ENCODE measurements at regions of chr21 and their contacts with region 1.

Region 1: GRCh38 chr21:43646550-43647260 is 12.6 kb downstream of the HSF2BP start:
- DNase-seq: no peak
- ATAC-seq: peak; percentile 98
- H3K4me3 ChIP-seq: no peak overlapping the region
- H3K27ac ChIP-seq: no peak overlapping the region
- H3K4me1 ChIP-seq: peaks cover 11% of the 10 kb centered on the region; the same call in 1 of the 2 replicates
- H3K27me3 ChIP-seq: no peaks in the 10 kb centered on the region; a peak in 1 of 4 replicates
- CTCF ChIP-seq: peak; percentile 99 to 100 (median 100); a peak in 5 of 6 replicates
- EP300 ChIP-seq: no peak
- POLR2A ChIP-seq: no peak
- RAD21 ChIP-seq: peak; percentile 99

Region 2: DNA sequence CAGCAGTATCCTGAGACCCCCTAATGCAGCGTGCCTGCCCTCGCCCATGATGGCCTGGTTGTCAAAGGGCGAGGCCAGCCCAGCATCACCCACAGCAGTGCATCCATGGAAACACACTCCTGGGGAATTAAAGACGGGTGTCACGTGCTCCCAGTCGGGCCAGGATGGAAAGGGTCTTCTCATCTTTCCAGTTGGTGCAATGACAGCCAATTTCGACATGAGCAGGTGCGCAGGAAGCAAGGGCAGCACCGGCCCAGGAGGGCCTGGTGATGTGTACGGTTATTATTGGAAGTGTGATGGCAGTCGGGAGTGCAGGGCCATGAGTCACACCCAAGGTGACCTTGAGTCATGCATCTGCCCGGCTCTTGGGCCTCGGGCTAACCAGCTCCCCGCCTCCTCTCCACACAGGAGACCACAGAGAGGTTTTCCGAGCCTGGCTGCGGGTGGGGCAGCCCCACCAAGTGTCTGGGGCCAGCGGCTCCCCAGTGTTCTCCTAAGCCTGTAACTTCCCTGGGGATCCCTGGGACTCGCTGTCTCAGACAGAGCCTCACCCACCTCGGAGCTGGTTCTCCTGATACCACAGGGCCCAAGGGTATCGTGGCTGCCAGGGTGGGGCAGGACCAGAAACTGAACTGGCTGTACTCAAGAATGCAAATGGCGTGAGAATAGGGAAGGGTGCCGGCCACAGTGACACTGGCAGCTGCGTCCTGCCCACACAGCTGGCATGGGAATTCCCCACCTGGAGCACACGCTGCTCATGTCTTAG is 339.6 kb before region 1 on chr21:
- CTCF ChIA-PET with region 1: no interaction called
- POLR2A ChIA-PET with region 1: no interaction called
- RAD21 ChIA-PET with region 1: interaction called, 3 read pairs
- SMC1A ChIA-PET with region 1: no interaction called
- in situ Hi-C with region 1: no loop called
- intact Hi-C with region 1: loop called (anchors 5 kb)
- DNase-seq: peak; percentile 39
- ATAC-seq: peak; percentile 88
- H3K4me3 ChIP-seq: no peak overlapping the region
- H3K27ac ChIP-seq: no peak overlapping the region
- H3K4me1 ChIP-seq: peaks cover 15% of the 10 kb centered on the region
- H3K27me3 ChIP-seq: no peaks in the 10 kb centered on the region
- CTCF ChIP-seq: no peak
- EP300 ChIP-seq: no peak
- POLR2A ChIP-seq: no peak
- RAD21 ChIP-seq: no peak

Region 3: GRCh38 chr21:43352568-43353281 is 294.0 kb before region 1 on chr21:
- CTCF ChIA-PET with region 1: interaction called, 9 read pairs
- POLR2A ChIA-PET with region 1: no interaction called
- RAD21 ChIA-PET with region 1: interaction called, 3 read pairs
- SMC1A ChIA-PET with region 1: interaction called, 3 read pairs
- in situ Hi-C with region 1: no loop called
- intact Hi-C with region 1: loop called (anchors 1 kb)
- DNase-seq: peak; percentile 100
- ATAC-seq: peak; percentile 82
- H3K4me3 ChIP-seq: peak overlapping the region; percentile 62
- H3K27ac ChIP-seq: peak overlapping the region; percentile 100
- H3K4me1 ChIP-seq: peaks cover 44% of the 10 kb centered on the region
- H3K27me3 ChIP-seq: no peaks in the 10 kb centered on the region
- CTCF ChIP-seq: no peak
- EP300 ChIP-seq: peak in 1 of 2 experiments; percentile 82; a peak in 2 of 4 replicates
- POLR2A ChIP-seq: no peak
- RAD21 ChIP-seq: 0 out of 2 replicates have a peak, but pooled peaks have one; percentile 10

Region 4: DNA sequence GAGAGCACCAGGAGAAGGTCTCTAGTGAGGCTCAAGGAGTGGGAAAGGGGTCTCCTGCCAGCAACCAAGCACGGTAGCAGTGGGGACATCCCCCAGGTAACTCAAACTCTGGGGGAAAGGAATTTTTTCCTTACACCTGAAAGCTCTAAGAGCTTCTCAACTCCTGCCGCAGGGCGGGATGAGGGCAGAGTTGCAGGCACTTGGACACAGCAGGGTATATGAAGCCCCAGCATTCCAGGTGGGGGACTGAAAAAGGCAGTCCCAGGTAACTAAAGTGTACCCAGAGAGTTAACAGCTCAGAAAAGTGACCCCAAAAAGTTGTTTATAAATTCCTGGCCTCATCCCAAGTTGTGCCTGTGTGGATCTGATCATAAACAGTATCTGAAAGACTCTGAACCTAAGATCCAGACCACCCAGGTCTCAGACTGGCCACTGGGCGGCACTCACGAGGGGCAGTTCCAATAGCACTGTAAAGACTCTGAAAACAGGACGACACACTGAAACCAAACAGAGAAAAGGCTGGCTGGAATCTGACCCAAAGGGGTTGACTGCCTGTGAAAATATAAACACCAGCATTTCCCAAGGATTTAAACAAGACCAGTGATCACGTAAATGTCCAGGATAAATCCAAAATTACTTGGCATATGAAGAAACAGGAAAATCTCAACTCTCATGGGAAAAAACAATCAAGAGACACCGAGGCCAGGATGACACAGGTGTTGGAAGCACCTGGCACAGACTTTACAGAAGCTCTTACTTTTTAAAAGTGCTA is 34.9 kb before region 1 on chr21:
- CTCF ChIA-PET with region 1: interaction called, 41 read pairs
- POLR2A ChIA-PET with region 1: no interaction called
- RAD21 ChIA-PET with region 1: interaction called, 7 read pairs
- SMC1A ChIA-PET with region 1: interaction called, 12 read pairs
- in situ Hi-C with region 1: loop called (anchors 5 kb)
- intact Hi-C with region 1: loop called (anchors 1 kb)
- DNase-seq: no peak
- ATAC-seq: peak; percentile 94
- H3K4me3 ChIP-seq: no peak overlapping the region
- H3K27ac ChIP-seq: no peak overlapping the region
- H3K4me1 ChIP-seq: peaks cover 13% of the 10 kb centered on the region; the same call in 1 of the 2 replicates
- H3K27me3 ChIP-seq: no peaks in the 10 kb centered on the region
- CTCF ChIP-seq: peak; percentile 70 to 97 (median 92)
- EP300 ChIP-seq: no peak
- POLR2A ChIP-seq: no peak
- RAD21 ChIP-seq: peak; percentile 72

Region 5: GRCh38 chr21:43627507-43627906 is 19.2 kb before region 1 on chr21:
- CTCF ChIA-PET with region 1: interaction called, 11 read pairs
- POLR2A ChIA-PET with region 1: no interaction called
- RAD21 ChIA-PET with region 1: no interaction called
- SMC1A ChIA-PET with region 1: interaction called, 4 read pairs
- in situ Hi-C with region 1: no loop called
- intact Hi-C with region 1: no loop called
- DNase-seq: no peak
- ATAC-seq: no peak
- H3K4me3 ChIP-seq: no peak overlapping the region
- H3K27ac ChIP-seq: no peak overlapping the region
- H3K4me1 ChIP-seq: no peaks in the 10 kb centered on the region
- H3K27me3 ChIP-seq: peaks cover 0 to 2% of the 10 kb centered on the region in 2 experiments; a peak in 3 of 4 replicates
- CTCF ChIP-seq: no peak
- EP300 ChIP-seq: no peak
- POLR2A ChIP-seq: no peak
- RAD21 ChIP-seq: no peak

Region 6: GRCh38 chr21:43659136-43660000 is 12.7 kb after region 1 on chr21 and contains the starts of genes HSF2BP and RRP1B:
- CTCF ChIA-PET with region 1: interaction called, 11 read pairs
- POLR2A ChIA-PET with region 1: no interaction called
- RAD21 ChIA-PET with region 1: interaction called, 4 read pairs
- SMC1A ChIA-PET with region 1: interaction called, 8 read pairs
- in situ Hi-C with region 1: no loop called
- intact Hi-C with region 1: no loop called
- DNase-seq: no peak
- ATAC-seq: peak; percentile 93
- H3K4me3 ChIP-seq: peak within 1 kb of the TSS; percentile 77
- H3K27ac ChIP-seq: peak within 1 kb of the TSS; percentile 89
- H3K4me1 ChIP-seq: peaks cover 27% of the 10 kb centered on the region
- H3K27me3 ChIP-seq: no peaks in the 10 kb centered on the region
- CTCF ChIP-seq: no peak
- EP300 ChIP-seq: 0 out of 4 replicates have a peak, but pooled peaks of 1 of the 2 experiments have one; percentile 11
- POLR2A ChIP-seq: peak; percentile 92
- RAD21 ChIP-seq: no peak
- polyA plus RNA-seq, gene HSF2BP: 0.07 to 0.19 TPM
- polyA plus RNA-seq, gene RRP1B: 8.1 to 9.7 TPM

Measured in GM12878 (cell line).